ENCODE measurements at regions of chr17 and their contacts with region 1.

Region 1: DNA sequence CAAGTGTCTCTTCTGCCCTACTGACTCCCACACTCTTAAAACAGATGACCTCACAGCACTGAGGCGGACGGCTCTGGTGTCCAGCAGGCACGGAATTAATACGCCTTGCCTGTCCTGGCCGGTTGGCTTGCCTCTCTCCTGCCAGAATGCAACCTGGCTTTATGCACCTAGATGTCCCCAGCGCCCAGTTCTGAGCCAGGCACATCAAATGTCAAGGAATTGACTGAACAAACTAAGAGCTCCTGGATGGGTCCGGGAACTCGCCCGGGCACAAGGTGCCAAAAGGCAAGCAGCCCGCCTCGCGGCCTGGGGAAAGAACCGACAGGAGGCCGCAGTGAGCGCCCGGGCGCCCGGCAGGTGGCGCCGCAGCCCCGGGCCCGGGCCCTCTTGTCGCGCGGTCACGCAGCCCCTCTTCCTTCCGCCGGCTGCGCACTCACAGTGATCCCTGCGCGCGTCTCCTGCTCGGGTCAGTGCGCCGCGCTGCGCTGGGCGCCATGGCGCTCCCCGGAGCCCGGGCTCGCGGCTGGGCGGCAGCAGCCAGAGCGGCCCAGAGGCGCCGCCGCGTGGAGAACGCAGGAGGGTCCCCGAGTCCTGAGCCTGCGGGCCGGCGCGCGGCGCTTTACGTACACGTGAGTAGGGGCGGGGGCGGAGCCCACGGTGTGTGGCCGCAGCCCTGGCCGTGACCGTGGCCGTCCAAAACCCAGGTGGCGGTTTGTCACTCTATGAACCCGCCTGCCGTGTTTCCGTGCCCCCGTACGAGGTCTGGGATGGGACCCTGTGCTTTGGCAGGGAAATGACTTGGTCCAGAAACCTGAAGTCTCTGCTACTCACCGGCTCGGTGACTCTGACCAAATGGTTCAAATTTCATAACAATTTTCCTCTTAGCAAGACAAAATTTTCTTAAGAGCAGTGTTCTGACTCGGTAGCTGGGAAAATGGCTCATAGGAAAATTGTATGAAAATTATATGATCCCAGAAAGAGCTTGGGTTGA is at the start of gene RSAD1:
- DNase-seq: peak; percentile 90
- H3K4me3 ChIP-seq: peak within 1 kb of the TSS; percentile 78 to 79
- H3K27ac ChIP-seq: peak within 1 kb of the TSS; percentile 85 to 93
- H3K4me1 ChIP-seq: peaks cover 22% of the 10 kb centered on the region
- H3K27me3 ChIP-seq: no peaks in the 10 kb centered on the region
- CTCF ChIP-seq: peak; percentile 85 to 95 (median 91)
- POLR2A ChIP-seq: no peak
- total RNA-seq, gene RSAD1: 35.7 to 38.0 TPM

Region 2: GRCh38 chr17:50372758-50373556 is 105.7 kb before region 1 on chr17 and contains the starts of genes EME1 and MRPL27:
- intact Hi-C with region 1: loop called (anchors 10 kb)
- DNase-seq: peak; percentile 92
- H3K4me3 ChIP-seq: peak within 1 kb of the TSS; percentile 68 to 84
- H3K27ac ChIP-seq: peak within 1 kb of the TSS; percentile 88 to 93
- H3K4me1 ChIP-seq: peaks cover 19% of the 10 kb centered on the region
- H3K27me3 ChIP-seq: no peaks in the 10 kb centered on the region
- CTCF ChIP-seq: no peak
- POLR2A ChIP-seq: no peak
- total RNA-seq, gene EME1: 15.6 to 19.3 TPM
- total RNA-seq, gene MRPL27: 54.5 to 69.1 TPM

Region 3: GRCh38 chr17:50386510-50386909 is 92.2 kb before region 1 on chr17:
- intact Hi-C with region 1: no loop called
- DNase-seq: no peak
- H3K4me3 ChIP-seq: no peak overlapping the region
- H3K27ac ChIP-seq: no peak overlapping the region
- H3K4me1 ChIP-seq: no peaks in the 10 kb centered on the region
- H3K27me3 ChIP-seq: no peaks in the 10 kb centered on the region
- CTCF ChIP-seq: no peak
- POLR2A ChIP-seq: no peak

Region 4: GRCh38 chr17:50541716-50542688 is 63.3 kb after region 1 on chr17:
- intact Hi-C with region 1: loop called (anchors 5 kb)
- DNase-seq: peak; percentile 90
- H3K4me3 ChIP-seq: peak overlapping the region; percentile 56 to 71
- H3K27ac ChIP-seq: peak overlapping the region; percentile 76 to 87
- H3K4me1 ChIP-seq: peaks cover 26% of the 10 kb centered on the region
- H3K27me3 ChIP-seq: no peaks in the 10 kb centered on the region
- CTCF ChIP-seq: no peak
- POLR2A ChIP-seq: no peak

Region 5: GRCh38 chr17:50626037-50626574 is 147.4 kb after region 1 on chr17:
- intact Hi-C with region 1: loop called (anchors 10 kb)
- DNase-seq: peak; percentile 86
- H3K4me3 ChIP-seq: no peak overlapping the region
- H3K27ac ChIP-seq: no peak overlapping the region
- H3K4me1 ChIP-seq: peaks cover 7% of the 10 kb centered on the region
- H3K27me3 ChIP-seq: no peaks in the 10 kb centered on the region
- CTCF ChIP-seq: peak; percentile 69 to 86 (median 70)
- POLR2A ChIP-seq: no peak